Aorta (tissue), 5 donors: ENCODE measurements at regions of chr6 and their contacts with region 1.

Region 1: GRCh38 chr6:20534295-20535262 is at the start of gene CDKAL1:
- DNase-seq: peak; percentile 92 to 95
- ATAC-seq: peak; percentile 95
- H3K4me3 ChIP-seq: peak within 1 kb of the TSS; percentile 92 to 100
- H3K27ac ChIP-seq: peak within 1 kb of the TSS; percentile 77 to 83
- H3K4me1 ChIP-seq: peaks cover 0 to 2% of the 10 kb centered on the region in 2 donors
- H3K27me3 ChIP-seq: no peaks in the 10 kb centered on the region
- total RNA-seq, gene CDKAL1: 15.3 to 21.7 TPM

Region 2: DNA sequence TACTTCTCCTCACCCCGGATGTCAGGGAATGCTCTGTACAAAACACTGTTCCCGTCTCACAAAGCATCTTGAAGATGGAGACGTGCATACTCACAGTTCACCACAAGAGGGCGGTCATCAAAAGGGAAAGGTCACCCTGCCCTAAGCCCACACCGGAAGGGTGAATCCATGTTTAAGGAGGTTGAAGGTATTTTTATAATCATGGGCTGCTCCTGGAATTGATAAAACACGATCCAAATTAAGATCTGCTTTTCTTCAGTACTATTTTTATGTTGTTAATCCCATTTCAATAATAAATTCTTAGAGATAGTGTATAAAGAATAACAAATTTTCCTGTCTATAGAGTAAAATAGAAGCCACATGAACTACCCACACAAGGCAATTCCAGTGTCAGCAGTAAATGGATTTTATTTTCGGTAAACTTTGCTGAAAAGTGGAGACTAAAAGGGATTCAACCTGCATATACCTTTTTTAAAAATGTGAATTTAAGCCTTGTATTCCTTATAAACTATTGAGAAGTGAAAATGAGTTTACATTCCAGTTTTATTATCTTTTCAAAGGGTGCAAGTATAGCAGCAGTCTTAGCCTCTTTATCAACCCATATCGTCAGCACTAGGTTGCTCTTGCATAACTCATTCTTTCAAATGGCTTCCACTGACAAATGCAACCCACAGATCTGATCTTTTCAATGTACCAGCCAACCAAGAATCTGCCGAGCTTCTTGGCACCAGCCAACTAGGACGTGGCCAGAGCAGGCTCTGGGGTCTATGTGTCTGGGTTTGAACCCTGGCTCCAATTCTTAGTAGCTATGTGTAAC is 242.6 kb before region 1 on chr6:
- intact Hi-C with region 1: loop called in 1 of 2 experiments (anchors 1 kb)
- DNase-seq: peak; percentile 80 to 83
- ATAC-seq: peak; percentile 90
- H3K4me3 ChIP-seq: no peak overlapping the region
- H3K27ac ChIP-seq: no peak overlapping the region
- H3K4me1 ChIP-seq: no peaks in the 10 kb centered on the region
- H3K27me3 ChIP-seq: no peaks in the 10 kb centered on the region

Region 3: GRCh38 chr6:21348504-21349195 is 814.1 kb after region 1 on chr6:
- intact Hi-C with region 1: no loop called
- DNase-seq: peak; percentile 75 to 79
- ATAC-seq: no peak
- H3K4me3 ChIP-seq: no peak overlapping the region
- H3K27ac ChIP-seq: no peak overlapping the region
- H3K4me1 ChIP-seq: no peaks in the 10 kb centered on the region
- H3K27me3 ChIP-seq: no peaks in the 10 kb centered on the region